Mammary epithelial cell (primary cell): ENCODE measurements at regions of chr22 and their contacts with region 1.

Region 1: DNA sequence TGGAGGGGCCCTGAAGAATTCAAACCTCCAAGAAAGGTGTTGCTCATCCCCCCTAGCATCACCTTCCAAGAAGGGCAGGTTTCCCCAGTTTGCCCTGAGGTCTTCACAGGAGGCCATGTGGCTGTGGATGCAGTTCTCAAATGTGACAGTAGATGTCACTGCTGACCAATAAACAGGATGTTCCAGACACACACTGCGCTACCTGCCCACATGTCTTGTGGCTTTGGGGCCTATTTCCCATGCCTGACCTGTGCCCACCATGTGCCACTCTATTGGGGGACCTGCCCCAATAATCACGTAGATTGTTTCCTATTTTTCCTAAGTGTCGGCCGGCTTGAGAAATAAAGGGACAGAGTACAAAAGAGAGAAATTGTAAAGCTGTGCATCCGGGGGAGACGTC is 4.5 kb downstream of the GSTT2 start:
- DNase-seq: peak; percentile 36
- H3K4me3 ChIP-seq: no peak overlapping the region
- H3K27ac ChIP-seq: no peak overlapping the region
- H3K4me1 ChIP-seq: no peaks in the 10 kb centered on the region
- H3K27me3 ChIP-seq: no peaks in the 10 kb centered on the region
- CTCF ChIP-seq: no peak

Region 2: GRCh38 chr22:24156913-24157821 is 172.7 kb after region 1 on chr22:
- CTCF ChIA-PET with region 1: no interaction called
- dilution Hi-C with region 1: no loop called
- in situ Hi-C with region 1: loop called in 1 of 2 experiments (anchors 25 kb)
- intact Hi-C with region 1: no loop called
- DNase-seq: peak; percentile 74
- H3K4me3 ChIP-seq: peak overlapping the region in 2 of 3 experiments; percentile 34 to 50
- H3K27ac ChIP-seq: no peak overlapping the region
- H3K4me1 ChIP-seq: peaks cover 30% of the 10 kb centered on the region
- H3K27me3 ChIP-seq: no peaks in the 10 kb centered on the region
- CTCF ChIP-seq: peak; percentile 76 to 81

Region 3: GRCh38 chr22:24175160-24175808 is 190.9 kb after region 1 on chr22:
- CTCF ChIA-PET with region 1: no interaction called
- dilution Hi-C with region 1: no loop called
- in situ Hi-C with region 1: loop called in 1 of 2 experiments (anchors 25 kb)
- intact Hi-C with region 1: loop called (anchors 5 kb)
- DNase-seq: peak; percentile 45
- H3K4me3 ChIP-seq: no peak overlapping the region
- H3K27ac ChIP-seq: no peak overlapping the region
- H3K4me1 ChIP-seq: no peaks in the 10 kb centered on the region
- H3K27me3 ChIP-seq: no peaks in the 10 kb centered on the region
- CTCF ChIP-seq: peak; percentile 74 to 88